H1 (cell line): ENCODE measurements at regions of chr15 and their contacts with region 1.

Region 1: GRCh38 chr15:68192804-68193486 is 12.2 kb downstream of the CALML4 start:
- DNase-seq: no peak
- H3K4me3 ChIP-seq: no peak overlapping the region
- H3K27ac ChIP-seq: no peak overlapping the region
- H3K4me1 ChIP-seq: no peaks in the 10 kb centered on the region; a peak in 1 of 7 replicates
- H3K27me3 ChIP-seq: no peaks in the 10 kb centered on the region
- CTCF ChIP-seq: no peak
- EP300 ChIP-seq: no peak
- POLR2A ChIP-seq: peak in 1 of 2 experiments; percentile 11; a peak in 1 of 3 replicates
- RAD21 ChIP-seq: no peak

Region 2: GRCh38 chr15:68175526-68175925 is 17.4 kb before region 1 on chr15:
- CTCF ChIA-PET with region 1: interaction called, 10 read pairs
- POLR2A ChIA-PET with region 1: no interaction called
- DNase-seq: no peak
- H3K4me3 ChIP-seq: no peak overlapping the region
- H3K27ac ChIP-seq: no peak overlapping the region
- H3K4me1 ChIP-seq: no peaks in the 10 kb centered on the region
- H3K27me3 ChIP-seq: no peaks in the 10 kb centered on the region
- CTCF ChIP-seq: no peak
- EP300 ChIP-seq: no peak
- POLR2A ChIP-seq: no peak
- RAD21 ChIP-seq: no peak

Region 3: DNA sequence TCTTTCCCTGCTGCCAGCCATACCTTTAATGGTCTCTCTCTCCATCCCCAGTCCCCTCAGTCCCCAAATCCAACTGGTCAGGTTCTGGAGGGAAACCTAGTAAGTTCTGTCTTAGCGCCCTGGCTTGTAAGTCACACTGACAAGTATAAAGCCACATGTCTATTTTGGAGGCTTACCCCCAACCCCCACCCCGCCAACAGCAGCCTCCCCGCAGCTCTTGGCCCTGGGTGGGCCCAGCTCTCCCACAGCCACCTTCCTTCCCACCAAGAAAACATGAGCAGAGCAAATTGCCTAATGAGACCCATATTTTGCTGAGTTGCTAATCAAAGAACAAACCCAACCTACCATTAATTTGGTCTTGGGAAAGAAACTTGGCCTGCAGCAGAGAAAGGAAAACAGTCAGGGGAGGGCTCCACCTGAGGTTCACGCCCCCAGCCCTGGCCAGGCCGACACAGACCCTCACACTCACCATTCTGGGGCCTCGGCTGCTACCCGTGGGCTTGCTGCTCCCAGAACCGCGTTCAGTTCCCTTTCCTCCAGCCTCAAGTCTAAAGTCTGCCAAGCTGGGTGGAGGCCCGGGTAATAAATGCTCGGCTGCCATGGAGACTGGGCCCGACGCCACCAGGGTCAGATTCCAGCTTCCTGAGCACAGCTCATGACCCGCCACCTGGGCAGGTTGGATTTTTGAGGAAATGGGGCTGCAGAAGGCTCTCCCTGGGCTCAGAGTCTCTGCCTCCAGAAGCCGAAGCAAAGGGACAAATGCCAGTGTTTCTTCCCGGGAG is 12.0 kb after region 1 on chr15 and contains the start of gene CALML4:
- CTCF ChIA-PET with region 1: interaction called, 101 read pairs
- POLR2A ChIA-PET with region 1: interaction called, 20 read pairs
- DNase-seq: no peak
- H3K4me3 ChIP-seq: peak within 1 kb of the TSS in 1 of 4 experiments; percentile 14; a peak in 2 of 8 replicates
- H3K27ac ChIP-seq: peak within 1 kb of the TSS; percentile 55; the same call in 1 of the 2 replicates
- H3K4me1 ChIP-seq: peaks cover 2 to 40% (median 25%) of the 10 kb centered on the region in 4 experiments
- H3K27me3 ChIP-seq: no peaks in the 10 kb centered on the region
- CTCF ChIP-seq: no peak
- EP300 ChIP-seq: no peak
- POLR2A ChIP-seq: 0 out of 3 replicates have a peak, but pooled peaks of 1 of the 2 experiments have one; percentile 0
- RAD21 ChIP-seq: no peak
- total RNA-seq, gene CALML4: 9.3 and 12.5 TPM in 2 replicates

Region 4: GRCh38 chr15:68210821-68211655 is 18.1 kb after region 1 on chr15:
- CTCF ChIA-PET with region 1: interaction called, 101 read pairs
- POLR2A ChIA-PET with region 1: interaction called, 20 read pairs
- DNase-seq: peak in 1 of 2 experiments; percentile 96
- H3K4me3 ChIP-seq: no peak overlapping the region
- H3K27ac ChIP-seq: peak overlapping the region; percentile 27; the same call in 1 of the 2 replicates
- H3K4me1 ChIP-seq: peaks cover 2 to 29% (median 11%) of the 10 kb centered on the region in 4 experiments
- H3K27me3 ChIP-seq: no peaks in the 10 kb centered on the region
- CTCF ChIP-seq: peak in 2 of 3 experiments; percentile 87 to 89; a peak in 3 of 4 replicates
- EP300 ChIP-seq: no peak
- POLR2A ChIP-seq: no peak
- RAD21 ChIP-seq: peak; percentile 68 to 82